ENCODE measurements at regions of chr12 and their contacts with region 1.

Region 1: GRCh38 chr12:53500776-53501614 is at the start of gene TARBP2:
- DNase-seq: peak; percentile 98
- H3K4me3 ChIP-seq: peak within 1 kb of the TSS; percentile 77
- H3K27ac ChIP-seq: peak within 1 kb of the TSS; percentile 81
- H3K4me1 ChIP-seq: peaks cover 17% of the 10 kb centered on the region
- H3K27me3 ChIP-seq: no peaks in the 10 kb centered on the region
- CTCF ChIP-seq: no peak
- total RNA-seq, gene TARBP2: 47.8 and 53.3 TPM in 2 replicates

Region 2: DNA sequence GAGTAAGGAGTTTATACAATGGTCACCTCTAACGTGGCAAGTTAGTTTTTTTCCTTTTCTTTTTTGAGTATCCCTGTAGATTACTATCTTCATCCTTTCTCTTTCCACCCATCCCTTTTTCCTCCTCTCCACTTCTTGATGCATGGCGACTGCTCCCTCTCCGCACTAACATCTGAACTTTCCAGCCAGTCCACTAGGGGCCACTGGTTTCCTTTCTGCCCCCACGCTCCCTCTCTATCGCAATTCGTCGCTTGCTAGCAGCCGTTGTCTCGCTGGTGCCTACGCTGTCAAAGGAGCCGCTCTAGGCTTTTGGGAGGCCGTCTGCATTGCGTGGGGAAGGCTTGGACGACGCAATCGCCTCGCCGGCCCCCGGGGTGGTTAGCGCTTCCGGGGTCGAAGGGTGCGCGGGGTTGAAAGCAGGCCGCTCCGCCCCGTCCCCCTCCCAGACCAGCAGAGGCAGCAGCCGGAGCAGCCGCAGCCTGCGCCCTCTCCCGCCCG is 49.3 kb before region 1 on chr12 and contains the start of gene PCBP2:
- CTCF ChIA-PET with region 1: interaction called, 3 read pairs
- POLR2A ChIA-PET with region 1: no interaction called
- intact Hi-C with region 1: loop called (anchors 5 kb)
- DNase-seq: peak; percentile 97
- H3K4me3 ChIP-seq: peak within 1 kb of the TSS; percentile 84
- H3K27ac ChIP-seq: peak within 1 kb of the TSS; percentile 91
- H3K4me1 ChIP-seq: peaks cover 16% of the 10 kb centered on the region
- H3K27me3 ChIP-seq: no peaks in the 10 kb centered on the region
- CTCF ChIP-seq: peak; percentile 86
- total RNA-seq, gene PCBP2: 668 and 833 TPM in 2 replicates

Region 3: GRCh38 chr12:53476769-53477209 is 24.2 kb before region 1 on chr12:
- CTCF ChIA-PET with region 1: no interaction called
- POLR2A ChIA-PET with region 1: interaction called, 13 read pairs
- intact Hi-C with region 1: no loop called
- DNase-seq: no peak
- H3K4me3 ChIP-seq: no peak overlapping the region
- H3K27ac ChIP-seq: no peak overlapping the region
- H3K4me1 ChIP-seq: no peaks in the 10 kb centered on the region
- H3K27me3 ChIP-seq: no peaks in the 10 kb centered on the region
- CTCF ChIP-seq: peak; percentile 55; the same call in 1 of the 2 replicates

Measured in PC-9 (cell line).